IMR-90 (cell line): ENCODE measurements at regions of chr2 and their contacts with region 1.

Region 1: DNA sequence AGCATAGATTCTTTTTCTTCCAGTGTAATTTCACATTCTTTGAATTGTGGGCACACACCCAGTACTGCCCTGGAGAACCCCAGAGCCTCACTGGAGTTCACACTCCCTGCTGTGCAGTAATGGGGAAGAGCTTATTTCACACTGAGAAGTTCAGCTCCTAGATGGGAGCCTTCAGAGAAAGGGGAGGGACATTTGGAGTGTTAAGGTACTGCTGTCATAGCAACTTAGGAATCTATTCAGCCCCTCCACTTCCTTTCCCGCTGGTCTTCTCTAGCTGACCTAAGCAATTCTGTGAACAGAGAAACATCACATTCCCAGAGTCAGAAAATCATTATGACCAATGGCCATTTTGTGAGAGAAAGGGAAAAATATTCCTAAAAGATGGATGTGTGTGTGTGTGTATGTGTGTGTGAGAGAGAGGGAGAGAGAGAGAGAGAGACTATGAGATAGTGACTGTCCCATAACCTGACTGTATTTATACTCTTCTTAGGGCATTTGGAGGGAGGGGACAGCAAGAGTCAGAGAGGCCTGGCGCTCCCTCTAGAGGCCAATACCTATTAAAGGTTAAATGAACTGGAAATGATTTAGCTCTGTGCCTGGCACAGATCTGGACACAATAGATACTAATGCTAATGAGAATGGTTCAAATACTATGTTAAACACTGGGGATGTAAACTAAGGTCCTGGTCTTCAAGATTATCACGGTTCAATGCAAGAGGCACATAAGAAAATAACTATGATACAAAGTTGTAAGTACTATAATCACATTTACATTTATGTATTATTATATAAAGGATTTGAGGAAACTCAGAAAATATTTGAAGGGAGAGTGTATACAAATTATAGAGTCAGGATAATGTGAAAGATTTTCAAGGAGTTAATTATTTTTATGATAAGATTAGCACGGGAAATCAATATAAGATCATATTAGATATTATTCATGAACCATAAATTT is 41.5 kb upstream of the RPE start:
- DNase-seq: peak; percentile 37
- ATAC-seq: peak; percentile 93
- H3K4me3 ChIP-seq: no peak overlapping the region
- H3K27ac ChIP-seq: no peak overlapping the region
- H3K4me1 ChIP-seq: no peaks in the 10 kb centered on the region
- H3K27me3 ChIP-seq: no peaks in the 10 kb centered on the region
- CTCF ChIP-seq: peak; percentile 64
- POLR2A ChIP-seq: no peak
- RAD21 ChIP-seq: peak; percentile 51

Region 2: DNA sequence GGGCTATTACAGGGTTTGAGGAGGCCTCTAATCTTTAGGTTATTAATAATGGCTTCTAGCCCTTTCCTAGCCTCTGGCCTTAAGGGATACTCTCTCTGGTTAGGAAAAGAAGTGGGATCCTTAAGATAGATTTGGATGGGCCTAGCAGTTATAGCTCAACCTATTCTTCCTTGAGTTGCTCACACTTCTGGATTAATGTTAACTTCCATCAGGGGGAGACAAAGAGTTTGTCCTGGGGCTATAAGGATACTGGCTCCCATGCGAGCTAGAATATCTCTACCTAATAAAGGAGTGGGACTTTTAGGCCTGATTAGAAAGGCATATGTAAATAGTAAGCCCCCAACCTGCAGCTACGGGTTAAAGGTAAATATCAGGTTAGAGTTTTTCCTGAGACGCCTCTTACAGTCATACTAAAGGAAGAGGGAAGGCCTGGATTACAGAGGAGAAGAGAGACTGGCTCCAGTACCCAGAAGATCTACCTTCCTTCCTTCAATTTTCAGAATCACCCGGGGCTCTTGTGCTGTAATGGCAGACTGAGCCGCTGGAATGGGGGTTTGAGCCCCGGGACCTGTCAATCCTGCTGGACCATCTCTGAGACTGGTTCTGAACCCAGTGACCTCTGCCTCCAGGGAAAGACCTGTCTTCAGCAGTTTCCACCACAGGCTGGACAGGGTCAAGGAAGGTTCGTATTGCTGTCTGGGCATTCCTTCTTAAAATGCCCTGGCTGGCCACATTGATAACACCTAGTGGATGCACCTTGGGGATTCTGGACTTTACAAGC is 1568.5 kb before region 1 on chr2:
- CTCF ChIA-PET with region 1: no interaction called
- POLR2A ChIA-PET with region 1: no interaction called
- dilution Hi-C with region 1: no loop called
- in situ Hi-C with region 1: loop called (anchors 25 kb)
- intact Hi-C with region 1: no loop called
- DNase-seq: no peak
- ATAC-seq: no peak
- H3K4me3 ChIP-seq: no peak overlapping the region
- H3K27ac ChIP-seq: no peak overlapping the region
- H3K4me1 ChIP-seq: no peaks in the 10 kb centered on the region
- H3K27me3 ChIP-seq: no peaks in the 10 kb centered on the region
- CTCF ChIP-seq: peak; percentile 22
- POLR2A ChIP-seq: no peak
- RAD21 ChIP-seq: no peak

Region 3: GRCh38 chr2:208407667-208408066 is 1553.3 kb before region 1 on chr2:
- CTCF ChIA-PET with region 1: no interaction called
- POLR2A ChIA-PET with region 1: no interaction called
- dilution Hi-C with region 1: no loop called
- in situ Hi-C with region 1: no loop called
- intact Hi-C with region 1: loop called (anchors 5 kb)
- DNase-seq: peak; percentile 2
- ATAC-seq: no peak
- H3K4me3 ChIP-seq: no peak overlapping the region
- H3K27ac ChIP-seq: no peak overlapping the region
- H3K4me1 ChIP-seq: peaks cover 5% of the 10 kb centered on the region; the same call in 1 of the 2 replicates
- H3K27me3 ChIP-seq: peaks cover 23% of the 10 kb centered on the region
- CTCF ChIP-seq: peak; percentile 37
- POLR2A ChIP-seq: no peak
- RAD21 ChIP-seq: peak; percentile 45

Region 4: GRCh38 chr2:209423562-209424198 is 537.3 kb before region 1 on chr2 and contains the start of gene MAP2:
- CTCF ChIA-PET with region 1: no interaction called
- POLR2A ChIA-PET with region 1: no interaction called
- dilution Hi-C with region 1: no loop called
- in situ Hi-C with region 1: no loop called
- intact Hi-C with region 1: loop called (anchors 2 kb)
- DNase-seq: peak; percentile 60
- ATAC-seq: peak; percentile 99
- H3K4me3 ChIP-seq: peak within 1 kb of the TSS; percentile 43
- H3K27ac ChIP-seq: no peak within 1 kb of the TSS
- H3K4me1 ChIP-seq: peaks cover 3% of the 10 kb centered on the region; the same call in 1 of the 2 replicates
- H3K27me3 ChIP-seq: no peaks in the 10 kb centered on the region
- CTCF ChIP-seq: peak; percentile 99
- POLR2A ChIP-seq: no peak
- RAD21 ChIP-seq: peak; percentile 58
- total RNA-seq, gene MAP2: 0.28 and 0.36 TPM in 2 replicates

Region 5: GRCh38 chr2:209577376-209578357 is 383.3 kb before region 1 on chr2:
- CTCF ChIA-PET with region 1: no interaction called
- POLR2A ChIA-PET with region 1: no interaction called
- dilution Hi-C with region 1: no loop called
- in situ Hi-C with region 1: no loop called
- intact Hi-C with region 1: loop called (anchors 5 kb)
- DNase-seq: peak; percentile 6
- ATAC-seq: no peak
- H3K4me3 ChIP-seq: no peak overlapping the region
- H3K27ac ChIP-seq: no peak overlapping the region
- H3K4me1 ChIP-seq: no peaks in the 10 kb centered on the region
- H3K27me3 ChIP-seq: no peaks in the 10 kb centered on the region
- CTCF ChIP-seq: peak; percentile 52
- POLR2A ChIP-seq: no peak
- RAD21 ChIP-seq: peak; percentile 27; the same call in 1 of the 2 replicates